Ascending aorta (tissue), 2 donors: ENCODE measurements at regions of chr7 and their contacts with region 1.

Region 1: DNA sequence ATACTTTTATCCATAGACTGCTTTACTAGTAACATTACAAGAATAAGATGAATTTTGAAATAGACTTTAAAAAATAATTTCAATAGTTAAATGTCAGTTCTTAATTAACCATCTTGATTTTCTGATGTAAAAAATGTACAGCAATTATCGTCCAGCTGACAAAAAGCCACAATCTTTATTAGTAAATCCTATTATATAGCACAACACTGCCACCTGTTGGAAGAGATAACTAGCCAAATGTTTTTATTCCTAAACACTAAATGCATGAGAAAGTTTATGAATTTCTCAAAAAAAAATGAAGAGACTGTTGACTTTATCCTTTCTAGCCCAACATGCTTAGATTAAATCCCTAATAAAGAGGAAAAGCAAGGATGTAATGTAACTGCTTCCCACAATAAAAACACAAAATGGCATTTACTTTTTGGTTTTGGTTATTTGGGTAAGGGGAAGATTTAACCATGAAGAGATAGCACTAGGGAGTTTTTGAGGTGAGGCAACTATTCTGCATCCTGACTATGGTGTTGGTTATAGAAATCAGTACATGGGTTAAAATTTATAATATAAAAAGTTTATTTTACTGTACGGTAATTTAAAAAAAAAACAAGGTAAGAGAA is 8.0 kb downstream of the COA1 start:
- DNase-seq: no peak
- H3K4me3 ChIP-seq: no peak overlapping the region
- H3K27ac ChIP-seq: no peak overlapping the region
- H3K4me1 ChIP-seq: no peaks in the 10 kb centered on the region
- H3K27me3 ChIP-seq: no peaks in the 10 kb centered on the region
- CTCF ChIP-seq: peak; percentile 56 to 75 (median 66)

Region 2: GRCh38 chr7:43700059-43700501 is 21.2 kb before region 1 on chr7:
- intact Hi-C with region 1: loop called (anchors 1 kb)
- DNase-seq: no peak
- H3K4me3 ChIP-seq: peak overlapping the region in 1 of 2 donors; percentile 39
- H3K27ac ChIP-seq: no peak overlapping the region
- H3K4me1 ChIP-seq: no peaks in the 10 kb centered on the region
- H3K27me3 ChIP-seq: no peaks in the 10 kb centered on the region
- CTCF ChIP-seq: peak; percentile 56 to 75 (median 60)

Region 3: DNA sequence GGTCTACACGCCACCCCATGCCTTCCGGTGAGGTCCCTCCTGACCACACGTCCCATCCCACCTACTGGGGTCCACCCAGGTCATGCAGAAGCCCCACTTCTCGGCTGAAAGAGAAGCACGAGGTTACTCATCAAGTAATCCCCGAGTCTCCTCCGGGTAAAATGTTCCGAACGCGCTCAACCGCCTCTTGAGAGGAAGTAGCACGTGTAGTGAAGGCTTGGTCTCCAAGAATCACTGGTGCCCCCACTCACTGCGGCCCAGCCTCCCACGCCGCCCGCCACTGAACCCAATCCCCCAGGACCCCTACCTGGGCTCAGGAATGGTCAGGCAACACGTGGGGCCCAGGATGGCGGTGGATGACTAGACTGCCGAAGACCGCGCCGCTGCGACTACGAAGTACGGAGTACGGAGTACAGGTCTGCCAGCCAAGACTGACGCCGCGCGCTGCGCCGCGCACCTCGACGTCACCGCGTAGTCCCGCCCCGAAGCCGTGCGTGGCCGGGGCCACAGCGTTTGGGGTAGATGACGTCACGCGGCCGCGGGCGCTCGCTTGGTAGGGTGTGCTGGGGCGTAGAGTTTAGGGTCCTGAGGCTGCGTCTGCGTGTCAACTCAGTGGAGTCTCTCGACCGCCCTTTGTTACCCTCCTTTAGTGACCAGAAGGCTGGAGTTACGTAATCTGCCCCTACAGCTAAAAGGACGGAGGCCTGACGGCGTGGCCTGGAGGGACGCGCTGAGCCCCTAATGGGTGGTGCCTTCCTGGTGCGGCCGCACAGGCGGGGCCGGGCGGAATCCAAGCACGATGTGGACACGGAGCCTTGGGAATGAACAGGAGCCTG is 1265.1 kb after region 1 on chr7:
- intact Hi-C with region 1: no loop called
- DNase-seq: peak; percentile 58 to 96
- H3K4me3 ChIP-seq: peak overlapping the region; percentile 68
- H3K27ac ChIP-seq: peak overlapping the region; percentile 89 to 90
- H3K4me1 ChIP-seq: peaks cover 6 to 12% of the 10 kb centered on the region in 2 donors
- H3K27me3 ChIP-seq: no peaks in the 10 kb centered on the region
- CTCF ChIP-seq: no peak